CD8-positive, alpha-beta T cell (primary cell): ENCODE measurements at regions of chr3 and their contacts with region 1.

Region 1: GRCh38 chr3:110314512-110315114 is 757.0 kb upstream of the NECTIN3 start:
- DNase-seq: peak; percentile 1 to 72 (median 55)
- ATAC-seq: peak; percentile 70
- H3K4me3 ChIP-seq: no peak overlapping the region
- H3K4me3 Mint-ChIP-seq: no peak overlapping the region
- H3K27ac ChIP-seq: no peak overlapping the region
- H3K27ac Mint-ChIP-seq: no peak overlapping the region
- H3K4me1 ChIP-seq: no peaks in the 10 kb centered on the region
- H3K4me1 Mint-ChIP-seq: peaks cover 2% of the 10 kb centered on the region
- H3K27me3 ChIP-seq: no peaks in the 10 kb centered on the region
- H3K27me3 Mint-ChIP-seq: peaks cover 4% of the 10 kb centered on the region
- CTCF ChIP-seq: peak; percentile 82

Region 2: DNA sequence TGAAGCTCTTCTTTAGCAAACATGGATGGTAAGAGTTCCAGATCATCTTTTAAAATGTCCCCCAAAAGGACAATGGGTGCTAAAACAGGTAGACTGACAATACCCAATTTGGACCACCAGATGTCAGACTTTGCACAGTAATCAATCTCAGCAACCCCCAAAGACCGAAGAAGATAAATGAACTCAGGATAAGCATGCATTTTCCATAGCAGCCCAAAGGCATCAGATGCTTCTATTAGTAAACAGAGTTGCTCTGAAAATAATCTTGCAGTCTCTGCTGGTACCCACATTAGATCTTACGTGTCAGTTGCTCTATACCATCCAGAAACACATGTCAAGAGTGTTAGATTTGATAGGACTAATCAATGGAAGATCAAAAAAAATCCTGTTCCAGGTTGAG is 1824.8 kb before region 1 on chr3:
- CTCF ChIA-PET with region 1: interaction called, 4 read pairs
- POLR2A ChIA-PET with region 1: no interaction called
- intact Hi-C with region 1: loop called (anchors 2 to 5 kb)
- DNase-seq: peak in 7 of 9 experiments; percentile 7 to 80 (median 37)
- ATAC-seq: peak; percentile 93
- H3K4me3 ChIP-seq: no peak overlapping the region
- H3K4me3 Mint-ChIP-seq: no peak overlapping the region
- H3K27ac ChIP-seq: no peak overlapping the region
- H3K27ac Mint-ChIP-seq: no peak overlapping the region
- H3K4me1 ChIP-seq: no peaks in the 10 kb centered on the region
- H3K4me1 Mint-ChIP-seq: peaks cover 3% of the 10 kb centered on the region
- H3K27me3 ChIP-seq: peaks cover 0 to 2% of the 10 kb centered on the region in 2 experiments
- H3K27me3 Mint-ChIP-seq: peaks cover 3% of the 10 kb centered on the region
- CTCF ChIP-seq: peak; percentile 85

Region 3: DNA sequence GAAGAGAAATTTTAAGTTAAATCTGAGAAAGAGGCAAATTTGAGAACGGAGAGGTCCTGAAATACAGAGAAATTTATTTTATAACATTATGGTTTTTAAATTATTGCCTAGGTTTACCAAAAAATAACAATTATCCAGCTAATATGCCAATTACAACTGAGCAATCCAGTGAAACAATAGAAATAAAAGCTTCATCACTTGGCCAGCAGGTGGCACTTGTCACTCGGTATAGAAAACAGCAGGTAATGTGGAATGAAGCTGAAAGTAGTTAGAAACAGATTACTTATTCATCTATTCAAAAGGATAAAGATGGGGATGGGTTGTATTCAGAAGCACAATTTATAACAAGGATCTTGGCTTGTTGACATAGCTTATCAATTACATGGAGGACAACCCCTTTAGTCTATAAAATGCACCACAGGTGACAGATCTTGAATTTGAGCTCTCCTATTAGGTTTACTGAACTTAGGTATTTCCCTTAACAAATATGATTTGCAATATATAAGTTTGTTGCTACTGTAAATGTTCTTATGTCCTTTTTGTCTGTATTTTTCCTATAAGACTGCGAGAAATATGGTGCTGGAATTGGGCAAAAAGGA is 1290.9 kb before region 1 on chr3:
- CTCF ChIA-PET with region 1: no interaction called
- POLR2A ChIA-PET with region 1: no interaction called
- intact Hi-C with region 1: loop called in 1 of 2 experiments (anchors 10 kb)
- DNase-seq: peak in 8 of 9 experiments; percentile 6 to 58 (median 28)
- ATAC-seq: peak; percentile 40
- H3K4me3 ChIP-seq: no peak overlapping the region
- H3K4me3 Mint-ChIP-seq: no peak overlapping the region
- H3K27ac ChIP-seq: no peak overlapping the region
- H3K27ac Mint-ChIP-seq: no peak overlapping the region
- H3K4me1 ChIP-seq: no peaks in the 10 kb centered on the region
- H3K4me1 Mint-ChIP-seq: no peaks in the 10 kb centered on the region
- H3K27me3 ChIP-seq: no peaks in the 10 kb centered on the region
- H3K27me3 Mint-ChIP-seq: no peaks in the 10 kb centered on the region
- CTCF ChIP-seq: peak; percentile 85

Region 4: GRCh38 chr3:109195815-109196214 is 1118.8 kb before region 1 on chr3:
- CTCF ChIA-PET with region 1: no interaction called
- POLR2A ChIA-PET with region 1: no interaction called
- intact Hi-C with region 1: no loop called
- DNase-seq: no peak
- ATAC-seq: no peak
- H3K4me3 ChIP-seq: no peak overlapping the region
- H3K4me3 Mint-ChIP-seq: no peak overlapping the region
- H3K27ac ChIP-seq: no peak overlapping the region
- H3K27ac Mint-ChIP-seq: no peak overlapping the region
- H3K4me1 ChIP-seq: no peaks in the 10 kb centered on the region
- H3K4me1 Mint-ChIP-seq: no peaks in the 10 kb centered on the region
- H3K27me3 ChIP-seq: no peaks in the 10 kb centered on the region
- H3K27me3 Mint-ChIP-seq: peaks cover 4% of the 10 kb centered on the region
- CTCF ChIP-seq: no peak

Region 5: DNA sequence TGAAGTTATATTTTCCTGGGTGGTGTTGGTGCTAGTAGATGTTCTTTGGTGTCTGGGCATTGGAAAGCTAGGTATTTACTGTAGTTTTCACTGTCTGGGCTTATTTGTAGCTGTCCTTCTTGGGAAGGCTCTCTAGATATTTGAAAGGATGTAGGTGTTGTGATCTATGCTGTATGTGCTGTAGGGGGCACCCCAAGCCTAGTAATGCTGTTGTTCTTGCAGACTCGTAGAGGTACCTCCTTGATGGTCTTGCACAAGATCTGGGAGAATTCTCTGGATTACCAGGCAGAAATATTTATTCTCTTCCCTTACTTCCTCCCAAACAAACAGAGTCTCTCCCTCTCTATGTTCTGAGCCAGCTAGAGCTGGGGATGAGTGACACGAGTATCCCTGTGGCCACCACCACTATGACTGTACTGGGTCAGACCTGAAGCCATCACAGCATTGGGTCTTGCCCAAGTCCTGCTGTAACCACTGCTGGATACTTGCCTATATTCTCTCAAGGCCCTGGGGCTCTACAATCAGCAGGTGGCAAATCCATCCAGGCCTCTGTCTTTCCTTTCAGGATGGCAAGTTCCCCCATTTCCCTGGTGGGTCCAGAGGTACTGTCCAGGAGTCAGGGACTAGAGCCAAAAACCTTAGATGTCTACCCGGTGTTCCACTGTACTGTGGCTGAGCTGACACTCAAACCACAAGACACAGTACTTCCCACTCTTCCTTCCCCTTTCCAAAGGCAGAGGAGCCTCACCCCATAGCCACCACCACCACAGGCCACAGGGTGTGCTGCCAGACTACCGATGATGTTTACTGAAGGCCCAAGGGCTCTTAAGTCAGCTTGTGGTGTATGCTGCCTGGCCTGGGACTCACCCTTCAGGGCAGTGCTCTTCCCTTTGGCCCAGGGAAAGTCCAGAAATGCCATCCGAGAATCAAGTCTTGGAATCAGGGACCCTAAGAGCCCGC is 782.1 kb before region 1 on chr3:
- CTCF ChIA-PET with region 1: interaction called, 13 read pairs
- POLR2A ChIA-PET with region 1: no interaction called
- intact Hi-C with region 1: loop called (anchors 1 to 2 kb)
- DNase-seq: peak in 8 of 9 experiments; percentile 11 to 67 (median 45)
- ATAC-seq: peak; percentile 40
- H3K4me3 ChIP-seq: no peak overlapping the region
- H3K4me3 Mint-ChIP-seq: no peak overlapping the region
- H3K27ac ChIP-seq: no peak overlapping the region
- H3K27ac Mint-ChIP-seq: no peak overlapping the region
- H3K4me1 ChIP-seq: no peaks in the 10 kb centered on the region
- H3K4me1 Mint-ChIP-seq: no peaks in the 10 kb centered on the region
- H3K27me3 ChIP-seq: no peaks in the 10 kb centered on the region
- H3K27me3 Mint-ChIP-seq: peaks cover 2% of the 10 kb centered on the region
- CTCF ChIP-seq: no peak

Region 6: DNA sequence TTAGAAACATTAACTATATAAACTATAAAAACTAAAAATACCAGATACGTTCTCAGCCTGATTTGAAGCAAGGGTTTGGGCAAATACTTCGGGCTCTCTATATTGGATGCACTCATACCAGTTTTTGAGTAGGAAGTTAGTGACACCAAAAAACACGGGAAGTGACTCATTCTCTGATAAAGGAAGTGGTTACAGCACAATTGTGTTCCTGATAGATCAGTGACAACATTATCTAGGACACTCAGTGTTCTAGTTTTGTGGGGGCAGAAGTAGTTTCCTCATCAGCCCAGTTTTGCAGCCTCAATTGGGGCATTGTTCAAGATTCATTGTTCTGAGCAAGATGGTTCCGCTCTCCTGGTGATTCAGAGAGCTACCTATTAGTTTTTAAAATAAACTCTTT is 507.7 kb before region 1 on chr3:
- CTCF ChIA-PET with region 1: no interaction called
- POLR2A ChIA-PET with region 1: no interaction called
- intact Hi-C with region 1: loop called in 1 of 2 experiments (anchors 1 kb)
- DNase-seq: peak in 8 of 9 experiments; percentile 4 to 88 (median 44)
- ATAC-seq: peak; percentile 85
- H3K4me3 ChIP-seq: peak overlapping the region in 1 of 2 experiments; percentile 0
- H3K4me3 Mint-ChIP-seq: peak overlapping the region; percentile 60
- H3K27ac ChIP-seq: peak overlapping the region; percentile 39 to 72
- H3K27ac Mint-ChIP-seq: peak overlapping the region; percentile 91
- H3K4me1 ChIP-seq: peaks cover 43% of the 10 kb centered on the region
- H3K4me1 Mint-ChIP-seq: peaks cover 48% of the 10 kb centered on the region
- H3K27me3 ChIP-seq: no peaks in the 10 kb centered on the region
- H3K27me3 Mint-ChIP-seq: no peaks in the 10 kb centered on the region
- CTCF ChIP-seq: no peak